ENCODE measurements at regions of chr3 and their contacts with region 1.

Region 1: DNA sequence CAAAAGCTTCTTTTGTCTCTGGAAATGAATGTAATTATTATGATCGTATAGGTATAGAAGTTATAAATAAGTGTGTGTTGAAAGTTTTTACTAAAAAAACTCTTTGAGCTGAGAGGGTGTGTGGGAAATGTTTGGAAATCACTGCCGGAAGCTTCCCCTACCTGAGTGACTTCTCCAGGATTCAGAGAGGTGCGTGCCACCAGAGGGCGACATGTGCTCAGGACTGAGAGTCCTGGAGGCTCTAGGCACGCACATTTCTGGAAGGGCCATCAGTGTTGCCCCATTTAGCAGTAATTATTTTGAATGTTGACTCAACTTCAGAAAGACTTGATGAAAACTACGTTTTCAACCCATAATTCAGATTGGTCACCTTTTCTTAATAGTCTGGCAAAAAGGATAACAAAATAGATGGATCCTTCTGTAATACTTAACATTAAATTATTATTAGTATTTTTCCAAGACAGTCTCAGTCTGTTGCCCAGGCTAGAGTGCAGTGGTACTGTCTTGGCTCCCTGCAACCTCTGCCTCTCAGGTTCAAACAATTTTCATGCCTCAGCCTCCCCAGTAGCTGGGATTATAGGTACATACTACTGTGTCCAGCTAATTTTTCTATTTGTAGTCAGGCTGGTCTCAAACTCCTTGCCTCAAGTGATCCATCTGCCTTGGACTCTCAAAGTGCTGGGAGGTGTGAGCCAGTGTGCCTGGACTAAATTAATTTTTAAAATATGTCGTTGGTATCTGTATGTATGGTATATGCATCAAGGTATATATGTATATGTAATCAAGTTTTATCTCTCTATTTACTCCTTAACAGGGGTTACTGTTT is 34.5 kb downstream of the GPR171 start:
- DNase-seq: peak; percentile 89
- ATAC-seq: peak; percentile 62
- H3K4me3 Mint-ChIP-seq: no peak overlapping the region
- H3K27ac Mint-ChIP-seq: no peak overlapping the region
- H3K4me1 Mint-ChIP-seq: peaks cover 49% of the 10 kb centered on the region
- H3K27me3 Mint-ChIP-seq: no peaks in the 10 kb centered on the region

Region 2: GRCh38 chr3:151183265-151183671 is 14.8 kb after region 1 on chr3:
- CTCF ChIA-PET with region 1: interaction called, 17 read pairs
- POLR2A ChIA-PET with region 1: interaction called, 6 read pairs
- DNase-seq: peak; percentile 38
- ATAC-seq: peak; percentile 79
- H3K4me3 Mint-ChIP-seq: peak overlapping the region; percentile 58
- H3K27ac Mint-ChIP-seq: peak overlapping the region; percentile 81
- H3K4me1 Mint-ChIP-seq: peaks cover 47% of the 10 kb centered on the region
- H3K27me3 Mint-ChIP-seq: no peaks in the 10 kb centered on the region

Region 3: DNA sequence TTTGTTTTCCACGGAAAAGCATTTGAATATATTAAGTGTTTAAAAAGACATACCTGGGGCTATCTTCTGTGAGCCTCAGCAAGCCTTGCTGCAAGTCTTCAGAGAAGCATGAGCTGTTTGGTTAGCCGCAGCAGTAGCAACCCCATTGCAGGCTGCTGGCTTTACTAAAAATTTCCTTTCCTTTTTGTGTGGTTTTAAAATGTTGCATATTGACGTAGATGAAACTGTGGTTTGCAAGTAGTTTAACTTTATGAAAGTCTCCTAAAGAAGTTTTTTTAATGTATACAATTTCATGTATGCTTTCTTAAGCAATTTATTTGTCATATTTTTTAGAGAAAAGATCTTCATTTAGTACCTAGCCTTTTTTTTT is 34.6 kb after region 1 on chr3 and contains the start of gene GPR171:
- CTCF ChIA-PET with region 1: interaction called, 108 read pairs
- POLR2A ChIA-PET with region 1: interaction called, 28 read pairs
- DNase-seq: peak; percentile 85
- ATAC-seq: peak; percentile 73
- H3K4me3 Mint-ChIP-seq: peak within 1 kb of the TSS; percentile 87
- H3K27ac Mint-ChIP-seq: peak within 1 kb of the TSS; percentile 94
- H3K4me1 Mint-ChIP-seq: peaks cover 59% of the 10 kb centered on the region
- H3K27me3 Mint-ChIP-seq: no peaks in the 10 kb centered on the region
- total RNA-seq, gene GPR171: 115 to 124 TPM

Region 4: DNA sequence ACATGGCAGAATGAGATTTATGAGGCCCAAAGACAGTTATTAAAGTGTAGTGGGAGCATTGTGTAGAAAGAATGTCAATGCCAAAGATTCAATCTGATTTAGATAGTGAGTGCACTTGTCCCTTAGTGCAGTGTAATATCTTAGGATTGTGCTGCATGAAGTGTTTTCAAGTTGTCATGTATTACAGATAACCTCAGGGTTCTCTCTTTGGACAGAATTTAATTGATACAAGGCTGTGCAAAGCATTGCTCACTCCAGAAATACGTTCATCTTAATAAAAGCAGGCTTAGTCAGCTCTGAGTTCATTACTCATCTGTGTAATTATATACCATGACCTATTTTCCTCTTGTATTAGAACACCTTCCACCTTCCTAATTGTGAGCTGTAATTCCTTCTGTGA is 50.6 kb after region 1 on chr3:
- CTCF ChIA-PET with region 1: interaction called, 38 read pairs
- POLR2A ChIA-PET with region 1: no interaction called
- DNase-seq: no peak
- ATAC-seq: no peak
- H3K4me3 Mint-ChIP-seq: no peak overlapping the region
- H3K27ac Mint-ChIP-seq: no peak overlapping the region
- H3K4me1 Mint-ChIP-seq: peaks cover 4% of the 10 kb centered on the region
- H3K27me3 Mint-ChIP-seq: no peaks in the 10 kb centered on the region

Region 5: GRCh38 chr3:151282921-151283320 is 114.4 kb after region 1 on chr3:
- CTCF ChIA-PET with region 1: interaction called, 185 read pairs
- POLR2A ChIA-PET with region 1: interaction called, 4 read pairs
- DNase-seq: no peak
- ATAC-seq: peak; percentile 62
- H3K4me3 Mint-ChIP-seq: no peak overlapping the region
- H3K27ac Mint-ChIP-seq: no peak overlapping the region
- H3K4me1 Mint-ChIP-seq: peaks cover 51% of the 10 kb centered on the region
- H3K27me3 Mint-ChIP-seq: no peaks in the 10 kb centered on the region

Region 6: GRCh38 chr3:151327571-151328198 is 159.2 kb after region 1 on chr3:
- CTCF ChIA-PET with region 1: interaction called, 11 read pairs
- POLR2A ChIA-PET with region 1: no interaction called
- DNase-seq: no peak
- ATAC-seq: no peak
- H3K4me3 Mint-ChIP-seq: no peak overlapping the region
- H3K27ac Mint-ChIP-seq: no peak overlapping the region
- H3K4me1 Mint-ChIP-seq: peaks cover 8% of the 10 kb centered on the region
- H3K27me3 Mint-ChIP-seq: peaks cover 4% of the 10 kb centered on the region

Region 7: GRCh38 chr3:151404316-151404715 is 235.8 kb after region 1 on chr3:
- CTCF ChIA-PET with region 1: no interaction called
- POLR2A ChIA-PET with region 1: no interaction called
- DNase-seq: no peak
- ATAC-seq: no peak
- H3K4me3 Mint-ChIP-seq: no peak overlapping the region
- H3K27ac Mint-ChIP-seq: no peak overlapping the region
- H3K4me1 Mint-ChIP-seq: no peaks in the 10 kb centered on the region
- H3K27me3 Mint-ChIP-seq: peaks cover 7% of the 10 kb centered on the region